HEK293 (cell line): ENCODE measurements at regions of chr19 and their contacts with region 1.

Region 1: DNA sequence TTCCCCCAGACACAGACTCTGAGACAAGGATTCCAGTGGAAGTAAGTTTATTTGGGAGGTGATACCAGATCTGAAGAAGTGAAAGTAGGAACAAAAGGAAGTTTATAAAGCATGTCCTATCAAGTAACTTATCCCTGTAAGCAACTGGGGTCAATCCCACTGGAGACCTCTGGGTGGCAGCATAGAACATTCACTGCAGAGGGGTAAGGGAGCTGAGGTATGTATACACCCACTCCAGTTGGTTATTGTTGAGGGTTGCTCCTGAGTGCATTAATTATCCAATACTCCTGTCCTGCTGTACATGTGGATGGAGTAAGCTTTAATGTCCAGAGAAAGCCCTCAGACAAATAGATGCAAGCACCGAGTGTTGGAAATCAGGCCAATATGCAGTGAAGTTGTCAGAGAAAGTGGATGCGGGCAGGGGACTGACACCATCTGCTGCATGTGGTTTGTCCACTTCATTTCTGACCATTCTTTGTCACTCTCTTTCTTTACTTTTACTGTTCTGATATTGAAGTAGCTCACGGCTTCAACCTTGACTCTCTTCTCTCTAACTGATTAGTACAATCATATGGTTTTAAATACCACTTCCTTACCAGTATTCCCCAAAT is 46.7 kb downstream of the NOTCH3 start:
- H3K4me3 ChIP-seq: no peak overlapping the region
- H3K27ac ChIP-seq: no peak overlapping the region
- H3K4me1 ChIP-seq: no peaks in the 10 kb centered on the region
- CTCF ChIP-seq: no peak

Region 2: GRCh38 chr19:14954071-14954659 is 199.9 kb before region 1 on chr19:
- CTCF ChIA-PET with region 1: no interaction called
- POLR2A ChIA-PET with region 1: no interaction called
- H3K4me3 ChIP-seq: no peak overlapping the region
- H3K27ac ChIP-seq: no peak overlapping the region
- H3K4me1 ChIP-seq: no peaks in the 10 kb centered on the region
- CTCF ChIP-seq: no peak

Region 3: DNA sequence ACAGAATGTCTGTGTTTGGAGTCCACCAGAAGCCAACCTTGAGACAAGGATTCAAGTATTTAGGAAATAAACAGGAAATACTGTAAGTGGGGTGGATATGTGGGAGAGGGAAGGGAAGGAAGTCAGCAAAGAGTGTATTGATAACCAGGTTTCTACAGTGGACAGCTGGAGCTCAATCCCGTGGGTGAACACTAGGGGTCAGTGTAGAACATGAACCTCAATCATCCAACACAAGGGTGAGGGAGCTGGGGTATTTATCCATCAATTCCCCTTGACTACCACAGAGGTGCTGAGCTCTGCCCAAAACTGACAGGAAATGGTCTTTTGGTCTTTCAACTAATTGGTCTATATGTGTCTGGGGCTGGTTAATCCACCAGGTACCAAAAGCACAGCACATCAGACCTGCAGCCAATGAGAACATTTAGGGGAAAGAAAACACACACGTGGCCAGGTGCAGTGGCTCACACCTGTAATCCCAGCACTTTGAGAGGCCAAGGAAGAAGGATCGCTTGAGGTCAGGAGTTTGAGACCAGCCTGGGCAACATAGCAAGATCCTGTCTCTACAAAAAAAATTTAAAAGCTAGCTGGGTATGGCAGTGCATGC is 52.5 kb before region 1 on chr19:
- CTCF ChIA-PET with region 1: interaction called, 20 read pairs
- POLR2A ChIA-PET with region 1: no interaction called
- H3K4me3 ChIP-seq: no peak overlapping the region
- H3K27ac ChIP-seq: no peak overlapping the region
- H3K4me1 ChIP-seq: no peaks in the 10 kb centered on the region
- CTCF ChIP-seq: no peak

Region 4: GRCh38 chr19:15125232-15126067 is 28.7 kb before region 1 on chr19:
- CTCF ChIA-PET with region 1: interaction called, 29 read pairs
- POLR2A ChIA-PET with region 1: no interaction called
- H3K4me3 ChIP-seq: peak overlapping the region; percentile 82
- H3K27ac ChIP-seq: peak overlapping the region; percentile 1; the same call in 1 of the 2 replicates
- H3K4me1 ChIP-seq: no peaks in the 10 kb centered on the region; the same call in 1 of the 2 replicates
- CTCF ChIP-seq: peak; percentile 90

Region 5: DNA sequence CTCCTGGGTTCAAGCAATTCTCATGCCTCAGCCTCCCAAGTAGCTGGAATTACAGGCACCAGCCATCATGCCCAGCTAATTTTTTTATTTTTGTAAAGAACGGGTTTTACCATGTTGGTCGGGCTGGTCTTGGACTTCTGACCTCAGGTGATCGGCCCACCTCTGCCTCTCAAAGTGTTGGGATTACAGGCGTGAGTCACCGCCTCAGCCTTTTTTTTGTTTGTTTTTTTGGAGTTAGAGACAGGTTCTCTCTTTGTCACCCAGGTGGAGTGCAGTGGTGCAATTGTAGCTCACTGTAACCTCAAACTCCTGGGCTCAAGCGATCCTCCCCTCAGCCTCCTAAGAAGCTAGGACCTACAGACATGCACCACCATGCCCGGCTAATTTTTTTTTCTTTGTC is 62.2 kb after region 1 on chr19:
- CTCF ChIA-PET with region 1: no interaction called
- POLR2A ChIA-PET with region 1: no interaction called
- H3K4me3 ChIP-seq: no peak overlapping the region
- H3K27ac ChIP-seq: no peak overlapping the region
- H3K4me1 ChIP-seq: no peaks in the 10 kb centered on the region
- CTCF ChIP-seq: no peak

Region 6: DNA sequence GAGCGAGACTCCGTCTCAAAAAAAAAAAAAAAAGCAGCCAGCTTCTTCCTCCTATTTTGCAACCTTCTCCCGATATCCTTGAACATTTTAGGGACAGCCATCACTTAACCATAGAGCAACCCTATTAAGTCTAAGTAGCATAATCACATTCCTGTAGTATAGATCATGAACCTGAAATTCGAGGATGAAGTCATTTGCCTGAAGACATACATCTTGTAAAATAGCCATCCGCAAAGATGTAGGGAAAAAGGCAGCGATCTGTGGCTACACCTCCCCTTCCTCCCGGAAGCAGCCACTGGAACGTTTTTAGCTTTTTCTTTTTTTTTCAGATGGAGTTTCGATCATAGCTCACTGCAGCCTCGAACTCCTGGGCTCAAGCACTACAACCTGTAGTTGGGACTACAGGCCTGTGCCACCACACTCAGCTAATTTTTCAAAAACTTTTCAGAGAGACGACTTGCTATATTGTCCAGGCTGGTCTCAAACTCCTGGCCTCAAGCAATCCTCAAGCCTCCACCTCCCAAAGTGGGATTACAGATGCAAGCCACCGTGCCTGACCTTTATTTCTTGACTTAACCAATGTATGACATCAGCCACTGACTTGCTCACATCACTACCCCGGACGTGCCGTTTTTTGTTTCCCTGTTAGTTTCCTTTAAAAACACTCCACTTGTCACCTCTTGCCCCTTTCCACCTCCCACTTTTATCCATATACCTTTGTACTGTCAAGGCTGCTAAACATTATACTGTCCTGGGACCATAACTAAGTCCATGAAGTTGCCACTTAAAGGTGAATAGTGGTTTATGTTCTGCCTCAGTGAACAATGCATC is 80.2 kb after region 1 on chr19:
- CTCF ChIA-PET with region 1: no interaction called
- POLR2A ChIA-PET with region 1: no interaction called
- H3K4me3 ChIP-seq: no peak overlapping the region
- H3K27ac ChIP-seq: no peak overlapping the region
- H3K4me1 ChIP-seq: no peaks in the 10 kb centered on the region
- CTCF ChIP-seq: no peak

Region 7: GRCh38 chr19:15266683-15267082 is 112.6 kb after region 1 on chr19:
- CTCF ChIA-PET with region 1: no interaction called
- POLR2A ChIA-PET with region 1: no interaction called
- H3K4me3 ChIP-seq: no peak overlapping the region
- H3K27ac ChIP-seq: no peak overlapping the region
- H3K4me1 ChIP-seq: no peaks in the 10 kb centered on the region
- CTCF ChIP-seq: no peak